ENCODE measurements at regions of chr5 and their contacts with region 1.

Region 1: DNA sequence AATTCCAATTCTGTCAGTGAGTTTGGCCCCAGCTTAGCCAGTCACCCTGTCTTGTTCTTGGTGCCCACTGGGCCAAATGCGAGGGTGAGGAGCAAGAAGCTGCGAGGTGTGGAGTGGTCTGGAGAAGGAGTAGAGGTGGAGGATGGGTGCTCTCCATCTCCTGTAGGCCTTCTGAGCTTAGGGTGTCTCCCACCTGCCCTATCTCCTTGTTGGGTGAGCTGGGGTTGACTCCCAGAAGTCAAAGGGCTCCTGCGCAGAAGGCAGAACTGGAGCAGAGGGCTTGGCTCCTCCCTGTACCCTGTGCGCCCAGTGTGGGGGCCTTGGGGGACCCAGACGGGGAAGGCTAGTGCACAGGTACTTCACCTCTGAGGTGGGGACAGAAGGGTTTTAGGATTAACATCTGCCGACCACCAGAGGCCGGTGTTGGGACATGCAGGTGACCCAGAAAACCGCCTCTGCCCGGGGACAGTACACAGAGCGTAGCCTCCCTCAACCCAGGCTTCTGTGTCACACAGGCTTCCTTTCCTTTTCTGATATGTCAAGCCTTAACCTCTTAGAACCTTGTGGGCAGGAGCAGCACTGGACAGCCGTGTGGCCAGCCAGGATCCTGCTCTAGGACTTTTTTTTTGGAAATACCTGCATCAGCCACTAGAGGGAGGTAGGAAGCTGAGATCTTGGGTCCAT is 16.9 kb downstream of the IL5 start:
- DNase-seq: peak; percentile 83
- H3K4me3 Mint-ChIP-seq: no peak overlapping the region
- H3K27ac Mint-ChIP-seq: no peak overlapping the region
- H3K4me1 Mint-ChIP-seq: no peaks in the 10 kb centered on the region
- H3K27me3 Mint-ChIP-seq: peaks cover 23% of the 10 kb centered on the region
- CTCF ChIP-seq: peak; percentile 96

Region 2: GRCh38 chr5:132500931-132501630 is 25.4 kb before region 1 on chr5:
- CTCF ChIA-PET with region 1: interaction called, 19 read pairs
- POLR2A ChIA-PET with region 1: interaction called, 3 read pairs
- intact Hi-C with region 1: no loop called
- DNase-seq: peak; percentile 91
- H3K4me3 Mint-ChIP-seq: no peak overlapping the region
- H3K27ac Mint-ChIP-seq: peak overlapping the region; percentile 83
- H3K4me1 Mint-ChIP-seq: peaks cover 35% of the 10 kb centered on the region
- H3K27me3 Mint-ChIP-seq: no peaks in the 10 kb centered on the region
- CTCF ChIP-seq: peak; percentile 99

Region 3: DNA sequence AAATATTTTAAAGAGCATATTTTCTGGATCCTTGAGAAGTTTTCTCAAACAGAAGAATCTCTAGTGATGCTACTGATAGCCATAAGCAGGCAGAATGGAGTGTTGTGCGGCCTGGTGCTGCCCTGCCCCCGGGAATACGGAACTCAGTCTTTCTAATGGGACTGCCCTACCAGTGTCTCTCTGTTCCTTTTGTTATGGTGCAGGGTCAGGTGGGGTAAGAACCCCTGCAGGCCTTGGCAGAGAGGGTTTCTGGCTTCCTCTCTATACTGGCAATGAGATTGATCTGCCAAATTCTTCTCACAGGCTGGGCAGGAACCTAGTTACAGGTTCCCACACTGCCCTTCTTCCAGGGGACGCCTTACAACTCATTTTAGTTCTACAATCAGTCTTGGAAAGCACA is 14.3 kb after region 1 on chr5:
- CTCF ChIA-PET with region 1: interaction called, 54 read pairs
- POLR2A ChIA-PET with region 1: no interaction called
- intact Hi-C with region 1: no loop called
- DNase-seq: no peak
- H3K4me3 Mint-ChIP-seq: no peak overlapping the region
- H3K27ac Mint-ChIP-seq: no peak overlapping the region
- H3K4me1 Mint-ChIP-seq: no peaks in the 10 kb centered on the region
- H3K27me3 Mint-ChIP-seq: peaks cover 54% of the 10 kb centered on the region
- CTCF ChIP-seq: no peak

Region 4: DNA sequence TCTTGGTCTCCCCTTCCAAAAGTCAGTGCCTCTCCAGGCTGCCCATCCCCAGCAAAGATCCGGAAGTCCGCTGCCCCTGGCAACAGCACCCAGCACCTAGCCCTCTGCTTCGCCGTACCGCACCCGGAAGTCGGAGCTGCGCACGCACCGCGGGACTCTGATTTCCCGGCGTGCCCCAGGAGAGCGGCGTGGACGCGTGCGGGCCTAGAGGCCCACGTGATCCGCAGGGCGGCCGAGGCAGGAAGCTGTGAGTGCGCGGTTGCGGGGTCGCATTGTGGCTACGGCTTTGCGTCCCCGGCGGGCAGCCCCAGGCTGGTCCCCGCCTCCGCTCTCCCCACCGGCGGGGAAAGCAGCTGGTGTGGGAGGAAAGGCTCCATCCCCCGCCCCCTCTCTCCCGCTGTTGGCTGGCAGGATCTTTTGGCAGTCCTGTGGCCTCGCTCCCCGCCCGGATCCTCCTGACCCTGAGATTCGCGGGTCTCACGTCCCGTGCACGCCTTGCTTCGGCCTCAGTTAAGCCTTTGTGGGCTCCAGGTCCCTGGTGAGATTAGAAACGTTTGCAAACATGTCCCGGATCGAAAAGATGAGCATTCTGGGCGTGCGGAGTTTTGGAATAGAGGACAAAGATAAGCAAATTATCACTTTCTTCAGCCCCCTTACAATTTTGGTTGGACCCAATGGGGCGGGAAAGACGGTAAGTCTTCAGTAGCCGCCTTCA is 30.5 kb after region 1 on chr5 and contains the start of gene RAD50:
- CTCF ChIA-PET with region 1: interaction called, 14 read pairs
- POLR2A ChIA-PET with region 1: interaction called, 4 read pairs
- intact Hi-C with region 1: no loop called
- DNase-seq: peak; percentile 97
- H3K4me3 Mint-ChIP-seq: peak within 1 kb of the TSS; percentile 97
- H3K27ac Mint-ChIP-seq: peak within 1 kb of the TSS; percentile 99
- H3K4me1 Mint-ChIP-seq: peaks cover 16% of the 10 kb centered on the region
- H3K27me3 Mint-ChIP-seq: no peaks in the 10 kb centered on the region
- CTCF ChIP-seq: no peak
- total RNA-seq, gene RAD50: 145 TPM in 2 replicates

Region 5: DNA sequence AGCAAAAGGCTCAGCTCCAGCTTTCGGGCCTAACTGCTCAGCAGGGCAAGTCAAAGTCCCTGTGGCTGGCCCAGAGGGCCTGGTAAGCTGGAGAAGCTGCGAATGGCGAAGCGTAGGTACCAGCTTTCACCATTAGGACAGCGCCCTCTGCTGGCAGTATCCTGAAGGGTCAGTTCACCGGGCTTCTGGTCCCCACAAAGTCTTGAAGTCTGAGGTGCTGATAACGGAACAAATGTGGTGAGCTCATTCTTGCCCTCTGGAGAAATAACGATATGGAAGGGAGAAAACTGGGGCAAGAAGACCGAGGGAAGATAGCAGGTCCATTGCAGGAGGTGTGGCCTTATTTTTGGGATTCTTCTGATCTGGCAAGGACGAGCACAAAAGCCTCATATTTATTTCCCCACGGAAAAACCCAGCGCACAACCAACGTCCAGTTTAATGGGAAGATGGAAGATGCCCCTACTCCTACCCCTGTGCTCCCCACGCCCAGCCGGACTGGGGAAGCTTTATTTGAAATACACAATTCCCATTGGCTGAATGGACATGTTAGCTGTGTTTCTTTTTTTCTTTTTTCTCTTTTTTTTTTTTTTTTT is 293.8 kb after region 1 on chr5:
- CTCF ChIA-PET with region 1: interaction called, 46 read pairs
- POLR2A ChIA-PET with region 1: no interaction called
- intact Hi-C with region 1: loop called (anchors 1 kb)
- DNase-seq: peak; percentile 96
- H3K4me3 Mint-ChIP-seq: no peak overlapping the region
- H3K27ac Mint-ChIP-seq: no peak overlapping the region
- H3K4me1 Mint-ChIP-seq: peaks cover 8% of the 10 kb centered on the region
- H3K27me3 Mint-ChIP-seq: no peaks in the 10 kb centered on the region
- CTCF ChIP-seq: peak; percentile 97